Naive thymus-derived CD4-positive, alpha-beta T cell (primary cell): ENCODE measurements at regions of chr1 and their contacts with region 1.

Region 1: DNA sequence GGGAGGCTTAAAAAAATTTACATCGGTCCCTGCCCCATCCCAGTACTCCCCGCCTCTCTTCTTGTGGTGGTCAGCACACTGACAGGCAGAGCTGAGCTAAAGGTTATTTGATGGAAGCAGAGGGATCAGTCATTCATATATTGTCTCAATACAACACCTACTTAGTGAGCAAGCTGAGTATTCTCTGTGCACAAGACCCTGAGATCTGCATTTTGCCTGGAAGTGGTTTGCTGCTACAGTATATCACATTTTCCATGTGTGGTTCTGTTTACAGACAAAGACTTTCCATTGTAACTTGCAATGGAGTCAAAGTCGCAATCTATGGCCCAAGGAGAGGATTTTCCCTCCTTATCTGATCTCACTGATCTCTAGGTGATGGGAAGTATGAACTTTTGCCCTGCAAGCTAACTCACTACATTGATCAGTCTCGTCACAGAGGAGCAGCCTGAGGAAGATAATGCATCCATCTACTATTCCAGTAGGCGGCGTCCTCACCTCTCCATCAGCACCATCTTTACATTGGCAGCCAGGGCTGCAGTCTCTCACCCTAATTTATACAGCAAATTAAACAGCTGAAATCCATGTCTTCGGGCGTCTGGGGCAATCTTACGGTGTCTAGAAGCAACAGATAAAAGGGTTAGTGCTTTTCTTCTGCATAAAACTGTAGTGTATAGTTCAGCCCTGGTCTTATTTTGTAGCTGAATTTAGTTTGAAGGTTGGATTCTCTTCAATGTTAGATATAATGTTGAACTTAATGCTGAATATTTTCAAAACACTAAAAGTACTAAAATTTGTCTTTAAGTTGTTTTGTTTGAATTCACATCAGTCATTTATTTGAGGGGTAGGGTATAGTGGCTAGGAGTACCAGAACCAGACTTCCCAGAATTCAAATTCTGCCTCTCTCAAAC is 3.2 kb upstream of the TRAF5 start:
- DNase-seq: peak in 8 of 9 donors; percentile 55 to 75 (median 68)
- ATAC-seq: peak; percentile 84
- H3K4me3 ChIP-seq: no peak overlapping the region
- H3K4me3 Mint-ChIP-seq: no peak overlapping the region
- H3K27ac ChIP-seq: no peak overlapping the region
- H3K27ac Mint-ChIP-seq: no peak overlapping the region
- H3K4me1 ChIP-seq: peaks cover 7 to 20% of the 10 kb centered on the region in 2 donors
- H3K4me1 Mint-ChIP-seq: peaks cover 20 to 41% (median 35%) of the 10 kb centered on the region in 7 donors
- H3K27me3 ChIP-seq: no peaks in the 10 kb centered on the region
- H3K27me3 Mint-ChIP-seq: no peaks in the 10 kb centered on the region

Region 2: DNA sequence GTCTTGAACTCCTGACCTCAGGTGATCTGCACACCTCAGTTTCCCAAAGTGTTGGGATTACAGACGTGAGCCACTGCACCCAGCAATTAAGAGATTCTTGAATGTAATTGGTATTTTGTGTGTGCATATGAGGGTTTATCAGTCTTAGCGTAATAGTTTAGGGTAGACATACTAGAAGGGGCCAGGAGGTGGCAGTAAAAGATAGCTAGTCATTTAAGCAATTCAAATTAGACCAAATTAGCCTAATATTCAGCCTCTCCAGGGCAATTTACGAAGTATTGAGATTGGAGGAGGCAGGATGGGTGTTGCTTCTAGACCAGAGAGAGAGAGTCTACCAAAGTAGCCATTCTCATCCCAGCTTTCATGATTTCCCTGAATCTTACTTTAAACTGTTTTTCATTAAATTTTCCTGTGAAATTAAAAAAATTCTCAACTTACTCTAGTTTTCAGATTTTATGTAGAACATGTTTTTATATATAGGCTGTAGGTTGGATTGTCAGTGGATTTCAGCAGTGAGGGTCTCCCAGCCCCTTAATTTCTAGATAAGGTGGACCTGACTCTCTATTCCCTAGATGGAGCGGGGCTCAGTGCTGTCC is 875.0 kb before region 1 on chr1:
- CTCF ChIA-PET with region 1: no interaction called
- POLR2A ChIA-PET with region 1: no interaction called
- intact Hi-C with region 1: loop called in 1 of 2 experiments (anchors 5 kb)
- DNase-seq: peak in 3 of 9 donors; percentile 6 to 16 (median 9)
- ATAC-seq: no peak
- H3K4me3 ChIP-seq: no peak overlapping the region
- H3K4me3 Mint-ChIP-seq: no peak overlapping the region
- H3K27ac ChIP-seq: no peak overlapping the region
- H3K27ac Mint-ChIP-seq: no peak overlapping the region
- H3K4me1 ChIP-seq: peaks cover 6 to 7% of the 10 kb centered on the region in 2 donors
- H3K4me1 Mint-ChIP-seq: peaks cover 6 to 15% (median 14%) of the 10 kb centered on the region in 7 donors
- H3K27me3 ChIP-seq: no peaks in the 10 kb centered on the region
- H3K27me3 Mint-ChIP-seq: peaks cover 0 to 13% (median 0%) of the 10 kb centered on the region in 5 donors

Region 3: GRCh38 chr1:211305044-211305443 is 18.4 kb before region 1 on chr1:
- CTCF ChIA-PET with region 1: interaction called, 3 read pairs
- POLR2A ChIA-PET with region 1: no interaction called
- intact Hi-C with region 1: loop called in 1 of 2 experiments (anchors 2 kb)
- DNase-seq: no peak
- ATAC-seq: no peak
- H3K4me3 ChIP-seq: no peak overlapping the region
- H3K4me3 Mint-ChIP-seq: no peak overlapping the region
- H3K27ac ChIP-seq: no peak overlapping the region
- H3K27ac Mint-ChIP-seq: peak overlapping the region in 4 of 9 donors; percentile 4 to 43 (median 34)
- H3K4me1 ChIP-seq: no peaks in the 10 kb centered on the region
- H3K4me1 Mint-ChIP-seq: peaks cover 7 to 53% (median 39%) of the 10 kb centered on the region in 7 donors
- H3K27me3 ChIP-seq: no peaks in the 10 kb centered on the region
- H3K27me3 Mint-ChIP-seq: no peaks in the 10 kb centered on the region

Region 4: GRCh38 chr1:211352985-211353515 is 29.6 kb after region 1 on chr1:
- CTCF ChIA-PET with region 1: interaction called, 10 read pairs
- POLR2A ChIA-PET with region 1: interaction called, 11 read pairs
- intact Hi-C with region 1: loop called (anchors 1 kb)
- DNase-seq: peak in 7 of 9 donors; percentile 28 to 53 (median 45)
- ATAC-seq: peak; percentile 83
- H3K4me3 ChIP-seq: peak overlapping the region; percentile 45
- H3K4me3 Mint-ChIP-seq: peak overlapping the region; percentile 78 to 92 (median 84)
- H3K27ac ChIP-seq: peak overlapping the region; percentile 16
- H3K27ac Mint-ChIP-seq: peak overlapping the region; percentile 81 to 98 (median 91)
- H3K4me1 ChIP-seq: peaks cover 31 to 46% of the 10 kb centered on the region in 2 donors
- H3K4me1 Mint-ChIP-seq: peaks cover 42 to 74% (median 65%) of the 10 kb centered on the region in 7 donors
- H3K27me3 ChIP-seq: no peaks in the 10 kb centered on the region
- H3K27me3 Mint-ChIP-seq: no peaks in the 10 kb centered on the region

Region 5: GRCh38 chr1:211382714-211383480 is 59.5 kb after region 1 on chr1:
- CTCF ChIA-PET with region 1: interaction called, 3 read pairs
- POLR2A ChIA-PET with region 1: interaction called, 10 read pairs
- intact Hi-C with region 1: loop called (anchors 1 kb)
- DNase-seq: peak; percentile 53 to 85 (median 64)
- ATAC-seq: peak; percentile 94
- H3K4me3 ChIP-seq: peak overlapping the region; percentile 77
- H3K4me3 Mint-ChIP-seq: peak overlapping the region; percentile 87 to 97 (median 92)
- H3K27ac ChIP-seq: peak overlapping the region; percentile 80
- H3K27ac Mint-ChIP-seq: peak overlapping the region; percentile 92 to 98 (median 95)
- H3K4me1 ChIP-seq: peaks cover 5% of the 10 kb centered on the region in 2 donors
- H3K4me1 Mint-ChIP-seq: peaks cover 0 to 39% (median 31%) of the 10 kb centered on the region in 7 donors
- H3K27me3 ChIP-seq: no peaks in the 10 kb centered on the region
- H3K27me3 Mint-ChIP-seq: peaks cover 0 to 5% (median 0%) of the 10 kb centered on the region in 5 donors

Region 6: GRCh38 chr1:211476200-211476849 is 152.9 kb after region 1 on chr1:
- CTCF ChIA-PET with region 1: interaction called, 82 read pairs
- POLR2A ChIA-PET with region 1: interaction called, 3 read pairs
- intact Hi-C with region 1: loop called (anchors 1 kb)
- DNase-seq: peak; percentile 43 to 81 (median 73)
- ATAC-seq: peak; percentile 89
- H3K4me3 ChIP-seq: no peak overlapping the region
- H3K4me3 Mint-ChIP-seq: no peak overlapping the region
- H3K27ac ChIP-seq: no peak overlapping the region
- H3K27ac Mint-ChIP-seq: no peak overlapping the region
- H3K4me1 ChIP-seq: no peaks in the 10 kb centered on the region
- H3K4me1 Mint-ChIP-seq: peaks cover 0 to 4% (median 0%) of the 10 kb centered on the region in 7 donors
- H3K27me3 ChIP-seq: no peaks in the 10 kb centered on the region
- H3K27me3 Mint-ChIP-seq: peaks cover 6 to 42% (median 24%) of the 10 kb centered on the region in 5 donors

Region 7: GRCh38 chr1:211654838-211655787 is 331.7 kb after region 1 on chr1:
- CTCF ChIA-PET with region 1: no interaction called
- POLR2A ChIA-PET with region 1: no interaction called
- intact Hi-C with region 1: loop called (anchors 1 to 2 kb)
- DNase-seq: peak; percentile 60 to 82 (median 71)
- ATAC-seq: peak; percentile 95
- H3K4me3 ChIP-seq: no peak overlapping the region
- H3K4me3 Mint-ChIP-seq: no peak overlapping the region
- H3K27ac ChIP-seq: no peak overlapping the region
- H3K27ac Mint-ChIP-seq: no peak overlapping the region
- H3K4me1 ChIP-seq: no peaks in the 10 kb centered on the region
- H3K4me1 Mint-ChIP-seq: peaks cover 0 to 5% (median 0%) of the 10 kb centered on the region in 7 donors
- H3K27me3 ChIP-seq: no peaks in the 10 kb centered on the region
- H3K27me3 Mint-ChIP-seq: peaks cover 0 to 13% (median 0%) of the 10 kb centered on the region in 5 donors